Activated CD8-positive, alpha-beta memory T cell treated with anti-CD3 and anti-CD28 coated beads, Interleukin-2, amount 10 ng/mL, durations not matched to agents 7 days and 5 days (primary cell): ENCODE measurements at regions of chr7 and their contacts with region 1.

Region 1: GRCh38 chr7:102279537-102280400 is 6.9 kb upstream of the SH2B2 start:
- DNase-seq: peak; percentile 69
- ATAC-seq: peak; percentile 84
- H3K4me3 Mint-ChIP-seq: no peak overlapping the region
- H3K27ac Mint-ChIP-seq: no peak overlapping the region
- H3K4me1 Mint-ChIP-seq: peaks cover 9% of the 10 kb centered on the region
- H3K27me3 Mint-ChIP-seq: peaks cover 9% of the 10 kb centered on the region

Region 2: DNA sequence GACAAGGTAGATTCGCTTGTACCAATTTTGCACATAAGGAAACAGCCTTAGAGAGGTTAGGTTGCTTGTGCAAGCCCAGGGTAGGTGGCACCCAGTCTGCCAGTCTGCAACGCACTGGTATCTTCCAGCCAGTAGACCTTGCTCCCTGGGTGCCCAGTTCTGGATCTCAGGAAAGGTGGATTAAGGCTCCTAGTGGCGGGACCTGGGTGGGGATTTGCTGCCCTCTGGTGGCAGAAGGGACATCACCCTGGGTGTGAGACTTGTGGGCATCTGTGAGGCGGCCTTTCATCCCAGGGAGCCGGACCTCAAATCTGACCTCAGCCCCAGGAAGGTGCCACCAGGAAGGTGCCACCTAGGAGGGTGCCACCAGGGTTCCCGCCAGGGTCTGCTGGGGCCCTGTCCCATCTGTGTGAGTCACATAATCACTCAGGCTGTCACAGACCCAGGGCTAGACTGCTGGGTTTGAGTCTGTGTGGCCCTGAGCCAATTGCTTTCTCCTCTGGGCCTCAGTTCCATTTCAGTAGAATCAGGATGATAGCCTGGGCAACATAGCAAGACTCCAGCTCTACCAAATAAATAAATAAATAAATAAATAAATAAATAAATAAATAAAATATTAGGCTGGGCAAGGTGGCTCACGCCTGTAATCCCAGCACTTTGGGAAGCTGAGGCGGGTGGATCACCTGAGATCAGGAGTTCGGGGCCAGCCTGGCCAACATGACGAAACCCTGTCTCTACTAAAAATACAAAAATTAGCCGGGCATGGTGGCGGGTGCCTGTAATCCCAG is 111.1 kb after region 1 on chr7:
- CTCF ChIA-PET with region 1: interaction called, 13 read pairs
- DNase-seq: peak; percentile 77
- ATAC-seq: peak; percentile 71
- H3K4me3 Mint-ChIP-seq: no peak overlapping the region
- H3K27ac Mint-ChIP-seq: no peak overlapping the region
- H3K4me1 Mint-ChIP-seq: peaks cover 5% of the 10 kb centered on the region
- H3K27me3 Mint-ChIP-seq: no peaks in the 10 kb centered on the region